ENCODE measurements at regions of chr10 and their contacts with region 1.

Region 1: GRCh38 chr10:23314835-23315239 is 29.8 kb downstream of the C10orf67 start:
- DNase-seq: peak; percentile 90
- H3K4me3 Mint-ChIP-seq: no peak overlapping the region
- H3K27ac Mint-ChIP-seq: no peak overlapping the region
- H3K4me1 Mint-ChIP-seq: no peaks in the 10 kb centered on the region
- H3K27me3 Mint-ChIP-seq: no peaks in the 10 kb centered on the region
- CTCF ChIP-seq: peak; percentile 67

Region 2: GRCh38 chr10:23173214-23174073 is 141.4 kb before region 1 on chr10:
- CTCF ChIA-PET with region 1: no interaction called
- POLR2A ChIA-PET with region 1: no interaction called
- intact Hi-C with region 1: no loop called
- DNase-seq: no peak
- H3K4me3 Mint-ChIP-seq: no peak overlapping the region
- H3K27ac Mint-ChIP-seq: no peak overlapping the region
- H3K4me1 Mint-ChIP-seq: no peaks in the 10 kb centered on the region
- H3K27me3 Mint-ChIP-seq: peaks cover 46% of the 10 kb centered on the region
- CTCF ChIP-seq: no peak

Region 3: GRCh38 chr10:23293145-23293724 is 21.6 kb before region 1 on chr10:
- CTCF ChIA-PET with region 1: interaction called, 37 read pairs
- POLR2A ChIA-PET with region 1: no interaction called
- intact Hi-C with region 1: no loop called
- DNase-seq: peak; percentile 69
- H3K4me3 Mint-ChIP-seq: no peak overlapping the region
- H3K27ac Mint-ChIP-seq: no peak overlapping the region
- H3K4me1 Mint-ChIP-seq: no peaks in the 10 kb centered on the region
- H3K27me3 Mint-ChIP-seq: peaks cover 30% of the 10 kb centered on the region
- CTCF ChIP-seq: peak; percentile 65

Region 4: GRCh38 chr10:23376229-23376655 is 61.4 kb after region 1 on chr10:
- CTCF ChIA-PET with region 1: interaction called, 11 read pairs
- POLR2A ChIA-PET with region 1: no interaction called
- intact Hi-C with region 1: no loop called
- DNase-seq: no peak
- H3K4me3 Mint-ChIP-seq: no peak overlapping the region
- H3K27ac Mint-ChIP-seq: no peak overlapping the region
- H3K4me1 Mint-ChIP-seq: peaks cover 22% of the 10 kb centered on the region
- H3K27me3 Mint-ChIP-seq: no peaks in the 10 kb centered on the region
- CTCF ChIP-seq: no peak

Region 5: DNA sequence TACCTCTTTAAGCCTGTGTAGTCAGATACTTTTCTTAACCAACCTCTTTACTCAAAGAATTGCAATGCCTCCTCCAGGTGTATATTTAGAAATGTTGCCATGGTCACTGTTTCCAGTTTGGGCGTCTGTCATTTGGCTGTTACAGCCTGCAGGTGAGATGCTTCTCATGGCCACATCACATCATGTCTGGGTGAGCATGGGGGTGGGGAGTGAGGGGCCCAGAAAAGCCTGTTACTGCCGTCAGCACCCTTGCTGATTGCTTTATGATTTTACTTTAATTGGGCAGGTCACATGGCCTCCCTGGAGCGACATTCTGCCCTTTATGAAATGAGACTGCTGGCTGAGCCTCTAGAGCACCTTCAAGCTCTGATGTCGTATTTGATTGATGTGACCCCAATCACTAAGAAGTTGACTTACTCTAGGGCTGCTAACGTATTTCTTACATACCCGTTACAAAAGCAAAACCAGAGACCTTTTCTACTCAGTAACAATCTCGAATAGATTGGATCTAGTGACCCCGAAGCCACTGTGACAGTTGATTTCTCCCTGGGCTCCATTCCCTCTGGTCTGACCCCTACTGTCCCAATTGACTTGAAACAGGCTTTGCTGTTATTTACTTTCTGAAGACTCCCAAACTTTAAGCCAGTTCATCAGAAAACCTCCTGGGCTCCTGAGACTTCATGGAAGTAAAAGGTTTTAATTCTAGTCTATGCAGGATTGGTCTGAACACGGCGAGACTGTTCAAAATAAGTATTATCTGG is 184.7 kb after region 1 on chr10:
- CTCF ChIA-PET with region 1: interaction called, 13 read pairs
- POLR2A ChIA-PET with region 1: no interaction called
- intact Hi-C with region 1: no loop called
- DNase-seq: no peak
- H3K4me3 Mint-ChIP-seq: no peak overlapping the region
- H3K27ac Mint-ChIP-seq: no peak overlapping the region
- H3K4me1 Mint-ChIP-seq: no peaks in the 10 kb centered on the region
- H3K27me3 Mint-ChIP-seq: no peaks in the 10 kb centered on the region
- CTCF ChIP-seq: no peak

Region 6: GRCh38 chr10:23525406-23525805 is 210.6 kb after region 1 on chr10:
- CTCF ChIA-PET with region 1: interaction called, 304 read pairs
- POLR2A ChIA-PET with region 1: interaction called, 10 read pairs
- intact Hi-C with region 1: loop called (anchors 1 kb)
- DNase-seq: peak; percentile 61
- H3K4me3 Mint-ChIP-seq: no peak overlapping the region
- H3K27ac Mint-ChIP-seq: no peak overlapping the region
- H3K4me1 Mint-ChIP-seq: peaks cover 6% of the 10 kb centered on the region
- H3K27me3 Mint-ChIP-seq: no peaks in the 10 kb centered on the region
- CTCF ChIP-seq: peak; percentile 76

Region 7: DNA sequence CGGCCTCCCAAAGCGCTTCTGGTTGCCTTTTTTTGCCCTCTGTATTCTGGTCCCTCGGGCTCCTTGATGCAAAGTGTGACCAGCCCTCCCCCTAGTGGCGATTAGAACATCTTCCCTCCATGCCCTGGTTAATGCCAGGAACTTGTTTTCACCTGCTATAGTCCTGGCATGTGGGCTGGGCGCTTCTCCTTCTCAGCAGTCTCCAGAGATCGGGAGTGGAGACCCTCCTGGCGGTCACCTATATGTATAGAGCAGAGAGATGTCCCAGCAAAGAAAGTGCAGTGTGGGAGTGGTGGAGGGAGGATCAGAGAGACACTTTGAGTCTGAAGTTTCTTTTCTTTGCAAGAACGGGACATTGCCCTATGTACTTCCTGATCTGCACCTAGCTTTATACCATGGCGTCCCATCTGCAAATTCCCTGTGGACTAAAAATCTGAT is 388.2 kb after region 1 on chr10:
- CTCF ChIA-PET with region 1: interaction called, 8 read pairs
- POLR2A ChIA-PET with region 1: interaction called, 3 read pairs
- intact Hi-C with region 1: loop called (anchors 1 kb)
- DNase-seq: peak; percentile 81
- H3K4me3 Mint-ChIP-seq: peak overlapping the region; percentile 64
- H3K27ac Mint-ChIP-seq: no peak overlapping the region
- H3K4me1 Mint-ChIP-seq: peaks cover 6% of the 10 kb centered on the region
- H3K27me3 Mint-ChIP-seq: peaks cover 39% of the 10 kb centered on the region
- CTCF ChIP-seq: peak; percentile 83